Posterior vena cava (tissue), 2 donors: ENCODE measurements at regions of chr2 and their contacts with region 1.

Region 1: DNA sequence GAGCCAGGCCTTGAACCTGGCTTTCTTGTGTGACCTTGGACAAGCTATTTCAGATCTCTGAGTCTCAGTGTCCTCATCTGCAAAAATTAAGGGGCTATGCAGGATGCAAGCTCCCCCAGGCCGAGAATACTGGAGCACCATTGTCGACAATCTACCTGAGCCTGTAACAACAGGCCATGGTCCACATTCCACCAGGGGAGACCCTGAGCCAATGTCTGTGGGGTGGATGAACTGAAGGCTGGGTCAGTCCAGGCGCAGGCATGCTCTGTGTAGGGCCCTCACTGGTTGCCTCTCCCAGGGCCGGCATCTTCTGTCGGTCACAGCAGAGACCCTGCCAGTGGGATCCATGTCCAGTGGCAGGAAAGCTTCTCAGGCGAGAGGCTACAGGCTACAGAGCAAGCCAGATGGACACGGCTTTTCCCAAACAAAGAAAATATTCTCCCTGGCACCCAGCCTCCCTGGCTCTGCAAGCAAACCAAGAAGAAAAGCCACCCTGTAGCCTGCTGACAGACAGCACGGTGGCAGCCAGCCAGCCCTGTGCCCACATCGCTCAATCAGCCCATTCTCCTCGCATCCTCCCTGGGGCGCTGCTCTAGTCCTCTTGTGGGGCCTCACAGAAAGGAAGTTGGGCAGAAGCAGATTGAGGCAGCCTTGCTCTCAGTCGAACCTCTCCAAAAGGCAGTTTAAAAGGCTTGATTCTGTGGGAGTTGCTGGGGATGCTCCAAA is 48.7 kb upstream of the FZD7 start:
- DNase-seq: no peak

Region 2: GRCh38 chr2:201130524-201131186 is 854.3 kb before region 1 on chr2:
- intact Hi-C with region 1: loop called in 1 of 2 experiments (anchors 10 kb)
- DNase-seq: no peak

Region 3: GRCh38 chr2:201839727-201840126 is 145.2 kb before region 1 on chr2:
- intact Hi-C with region 1: no loop called
- DNase-seq: no peak

Region 4: DNA sequence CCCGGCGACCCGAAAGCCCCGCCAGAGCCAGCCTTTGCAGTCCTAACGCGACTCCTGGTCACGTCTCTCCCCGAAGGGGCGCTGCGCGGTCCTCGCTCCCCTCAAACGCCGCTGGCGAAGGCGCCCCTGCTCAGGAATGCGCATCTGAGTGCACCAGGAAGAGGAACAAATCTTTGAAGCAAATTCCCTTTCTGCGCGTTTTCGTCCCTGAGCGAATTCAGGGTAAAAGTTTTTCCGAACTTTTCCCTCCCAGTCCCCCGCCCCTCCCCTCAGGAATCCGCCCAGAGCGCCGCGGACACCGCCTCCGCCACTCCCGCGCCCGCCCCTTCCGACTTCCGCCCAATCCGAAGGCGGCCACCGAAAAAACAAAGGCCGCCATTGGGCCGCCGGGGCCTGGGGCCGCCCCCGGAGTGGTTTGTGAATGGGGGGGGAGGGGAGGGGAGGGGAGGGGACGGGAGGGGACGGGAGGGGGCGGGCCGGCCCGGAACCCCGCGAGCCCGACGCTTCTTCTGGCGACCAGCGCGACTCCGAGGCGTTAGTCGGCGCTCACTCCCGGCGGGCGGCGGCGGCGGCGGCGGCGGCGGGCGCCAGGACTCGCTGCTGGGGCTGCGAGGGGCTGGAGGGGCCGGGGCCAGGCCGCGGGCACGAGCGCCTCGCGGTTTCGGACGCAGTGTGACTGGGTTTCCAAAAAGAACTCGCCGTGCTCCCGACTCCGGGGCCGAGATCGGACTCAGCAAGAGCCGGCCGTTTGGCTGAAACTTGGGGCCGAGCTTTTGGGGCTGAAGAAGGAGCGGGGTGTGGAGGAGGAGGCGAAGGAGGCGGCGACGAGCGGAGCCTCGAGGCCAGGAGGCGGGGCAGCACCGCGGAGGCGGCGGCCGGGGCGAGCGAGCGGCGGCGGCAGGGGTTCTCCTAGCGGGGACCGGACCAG is 48.6 kb after region 1 on chr2 and contains the start of gene FZD7:
- intact Hi-C with region 1: no loop called
- DNase-seq: peak; percentile 97
- total RNA-seq, gene FZD7: 20.9 to 32.0 TPM

Region 5: DNA sequence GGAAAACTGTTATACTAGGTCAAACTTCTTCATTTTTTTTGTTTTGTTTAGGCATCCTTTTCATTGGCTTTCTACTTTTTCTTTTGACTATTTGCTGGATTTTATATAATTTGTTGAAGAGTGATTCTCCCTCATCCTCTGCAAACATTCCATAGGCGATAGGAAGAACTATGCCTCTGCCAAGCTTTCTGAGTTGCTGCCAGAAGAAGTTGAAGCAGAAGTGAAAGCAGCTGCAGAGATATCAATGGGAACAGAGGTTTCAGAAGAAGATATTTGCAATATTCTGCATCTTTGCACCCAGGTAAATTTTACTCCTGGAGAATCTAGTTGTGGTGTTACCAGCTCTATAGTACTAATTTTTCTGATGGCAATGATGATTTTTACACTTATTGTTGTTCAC is 306.0 kb after region 1 on chr2:
- intact Hi-C with region 1: no loop called
- DNase-seq: no peak

Region 6: DNA sequence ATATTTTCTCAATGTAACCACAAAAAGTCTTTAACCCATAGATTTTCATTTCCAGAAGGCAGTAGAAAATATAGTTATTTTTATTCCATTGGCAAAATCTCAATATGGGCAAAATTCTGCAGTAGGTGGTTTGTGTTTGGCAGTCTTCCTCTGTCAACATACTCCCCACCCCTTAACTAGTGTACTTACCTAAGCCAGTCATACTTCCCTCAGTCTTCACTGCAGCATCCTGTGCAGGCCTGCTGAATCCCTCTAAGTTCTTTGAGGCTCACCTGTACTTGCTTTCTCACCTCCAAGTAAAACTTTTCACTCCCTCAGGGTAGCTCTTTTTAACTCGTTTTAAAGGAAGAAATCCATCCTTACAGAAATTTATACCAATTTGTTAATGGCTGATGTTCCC is 933.9 kb after region 1 on chr2:
- intact Hi-C with region 1: no loop called
- DNase-seq: no peak